Tibial artery (tissue), 4 donors: ENCODE measurements at regions of chr2 and their contacts with region 1.

Region 1: DNA sequence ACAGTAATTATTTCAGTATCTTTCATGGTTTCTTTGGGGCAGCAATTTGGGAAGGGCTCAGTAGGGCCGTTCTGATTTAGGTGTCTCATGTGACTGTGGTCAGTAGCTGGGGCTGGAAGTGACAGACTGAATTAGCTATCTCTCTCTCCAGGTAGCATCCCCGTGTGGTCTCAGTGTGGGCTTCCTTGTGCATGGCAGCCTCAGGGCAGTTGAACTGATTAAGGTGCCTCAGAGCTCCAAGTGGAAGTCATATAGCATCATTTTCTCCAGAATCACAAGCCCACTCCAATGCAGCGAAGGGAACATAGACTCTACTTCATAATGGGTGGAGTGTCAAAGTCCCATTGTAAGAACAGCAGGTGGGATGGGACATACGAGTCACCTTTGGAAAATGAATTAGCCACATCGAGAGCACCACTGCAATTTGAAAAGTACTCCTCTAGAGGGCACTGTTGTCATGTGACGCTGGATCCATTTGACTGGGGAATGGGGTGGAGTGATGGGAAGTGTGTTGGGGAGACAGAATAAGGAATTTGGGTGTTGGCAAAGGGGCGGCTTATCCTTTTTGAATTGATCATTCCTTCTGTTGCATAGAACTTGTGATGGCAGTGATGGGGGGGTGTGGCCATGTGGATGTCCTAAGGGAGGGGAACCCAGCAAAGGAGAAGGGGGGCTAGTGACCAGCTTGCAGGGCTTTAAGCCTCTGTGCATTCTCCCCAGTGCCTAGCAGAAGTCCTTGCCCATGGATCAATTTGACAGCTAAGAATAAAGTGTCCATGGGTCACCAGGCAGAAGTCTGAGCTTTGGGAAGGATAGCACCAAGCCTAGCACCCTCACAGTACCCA is 39.3 kb upstream of the FAM136A start:
- DNase-seq: no peak
- H3K4me3 ChIP-seq: no peak overlapping the region
- H3K27ac ChIP-seq: no peak overlapping the region
- H3K4me1 ChIP-seq: no peaks in the 10 kb centered on the region
- H3K27me3 ChIP-seq: peaks cover 0 to 23% of the 10 kb centered on the region in 2 donors
- CTCF ChIP-seq: peak in 1 of 2 experiments; percentile 57

Region 2: GRCh38 chr2:70301344-70302194 is 39.6 kb before region 1 on chr2 and contains the start of gene FAM136A:
- intact Hi-C with region 1: no loop called
- DNase-seq: peak; percentile 74 to 89
- H3K4me3 ChIP-seq: peak within 1 kb of the TSS; percentile 72 to 85
- H3K27ac ChIP-seq: peak within 1 kb of the TSS; percentile 80
- H3K4me1 ChIP-seq: peaks cover 0 to 10% (median 7%) of the 10 kb centered on the region in 4 donors
- H3K27me3 ChIP-seq: no peaks in the 10 kb centered on the region
- CTCF ChIP-seq: peak; percentile 93 to 98

Region 3: GRCh38 chr2:70616168-70616694 is 275.1 kb after region 1 on chr2:
- intact Hi-C with region 1: loop called (anchors 10 kb)
- DNase-seq: no peak
- H3K4me3 ChIP-seq: no peak overlapping the region
- H3K27ac ChIP-seq: no peak overlapping the region
- H3K4me1 ChIP-seq: no peaks in the 10 kb centered on the region
- H3K27me3 ChIP-seq: peaks cover 0 to 17% of the 10 kb centered on the region in 2 donors
- CTCF ChIP-seq: no peak

Region 4: GRCh38 chr2:70789304-70790135 is 448.4 kb after region 1 on chr2:
- intact Hi-C with region 1: no loop called
- DNase-seq: peak; percentile 63 to 72
- H3K4me3 ChIP-seq: peak overlapping the region; percentile 6 to 34
- H3K27ac ChIP-seq: no peak overlapping the region
- H3K4me1 ChIP-seq: peaks cover 0 to 15% (median 8%) of the 10 kb centered on the region in 4 donors
- H3K27me3 ChIP-seq: peaks cover 0 to 72% of the 10 kb centered on the region in 2 donors
- CTCF ChIP-seq: peak; percentile 28 to 29